Gastrocnemius medialis (tissue), 4 donors: ENCODE measurements at regions of chr1 and their contacts with region 1.

Region 1: GRCh38 chr1:117045644-117046043 is 14.5 kb upstream of the TTF2 start:
- DNase-seq: no peak
- ATAC-seq: no peak
- H3K4me3 ChIP-seq: no peak overlapping the region
- H3K27ac ChIP-seq: no peak overlapping the region
- H3K4me1 ChIP-seq: no peaks in the 10 kb centered on the region
- H3K27me3 ChIP-seq: no peaks in the 10 kb centered on the region
- CTCF ChIP-seq: no peak
- POLR2A ChIP-seq: no peak

Region 2: GRCh38 chr1:116570358-116571200 is 475.1 kb before region 1 on chr1 and contains the start of gene CD58:
- in situ Hi-C with region 1: loop called in 3 of 4 experiments (anchors 10 to 25 kb)
- intact Hi-C with region 1: no loop called
- DNase-seq: peak; percentile 70 to 78
- ATAC-seq: peak; percentile 89 to 91
- H3K4me3 ChIP-seq: peak within 1 kb of the TSS; percentile 61 to 86 (median 80)
- H3K27ac ChIP-seq: peak within 1 kb of the TSS; percentile 85 to 97 (median 92)
- H3K4me1 ChIP-seq: peaks cover 11 to 18% of the 10 kb centered on the region in 2 donors
- H3K27me3 ChIP-seq: no peaks in the 10 kb centered on the region
- CTCF ChIP-seq: peak; percentile 60 to 67 (median 62)
- POLR2A ChIP-seq: peak; percentile 73 to 82
- total RNA-seq, gene CD58: 4.1 to 15.9 (median 10.2) TPM

Region 3: GRCh38 chr1:117001254-117001927 is 44.3 kb before region 1 on chr1 and contains the start of gene CD101:
- in situ Hi-C with region 1: no loop called
- intact Hi-C with region 1: no loop called
- DNase-seq: no peak
- ATAC-seq: no peak
- H3K4me3 ChIP-seq: no peak within 1 kb of the TSS
- H3K27ac ChIP-seq: no peak within 1 kb of the TSS
- H3K4me1 ChIP-seq: no peaks in the 10 kb centered on the region
- H3K27me3 ChIP-seq: no peaks in the 10 kb centered on the region
- CTCF ChIP-seq: no peak
- POLR2A ChIP-seq: no peak
- total RNA-seq, gene CD101: 0.10 TPM in 1 of 4 donors, not detected in the others